ENCODE measurements at regions of chr15 and their contacts with region 1.

Region 1: GRCh38 chr15:78392430-78392829 is 45.6 kb upstream of the IREB2 start:
- DNase-seq: no peak
- H3K4me3 ChIP-seq: no peak overlapping the region
- H3K4me3 Mint-ChIP-seq: no peak overlapping the region
- H3K27ac ChIP-seq: no peak overlapping the region
- H3K27ac Mint-ChIP-seq: no peak overlapping the region
- H3K4me1 ChIP-seq: no peaks in the 10 kb centered on the region
- H3K4me1 Mint-ChIP-seq: no peaks in the 10 kb centered on the region
- H3K27me3 ChIP-seq: no peaks in the 10 kb centered on the region
- H3K27me3 Mint-ChIP-seq: peaks cover 7 to 11% of the 10 kb centered on the region in 2 donors

Region 2: GRCh38 chr15:78225783-78226541 is 166.5 kb before region 1 on chr15:
- CTCF ChIA-PET with region 1: no interaction called
- POLR2A ChIA-PET with region 1: interaction called, 15 read pairs
- DNase-seq: no peak
- H3K4me3 ChIP-seq: no peak overlapping the region
- H3K4me3 Mint-ChIP-seq: peak overlapping the region in 4 of 7 donors; percentile 21 to 52 (median 36)
- H3K27ac ChIP-seq: no peak overlapping the region
- H3K27ac Mint-ChIP-seq: peak overlapping the region in 4 of 8 donors; percentile 38 to 68 (median 50)
- H3K4me1 ChIP-seq: peaks cover 9% of the 10 kb centered on the region
- H3K4me1 Mint-ChIP-seq: peaks cover 14 to 27% (median 23%) of the 10 kb centered on the region in 3 donors
- H3K27me3 ChIP-seq: no peaks in the 10 kb centered on the region
- H3K27me3 Mint-ChIP-seq: no peaks in the 10 kb centered on the region

Region 3: DNA sequence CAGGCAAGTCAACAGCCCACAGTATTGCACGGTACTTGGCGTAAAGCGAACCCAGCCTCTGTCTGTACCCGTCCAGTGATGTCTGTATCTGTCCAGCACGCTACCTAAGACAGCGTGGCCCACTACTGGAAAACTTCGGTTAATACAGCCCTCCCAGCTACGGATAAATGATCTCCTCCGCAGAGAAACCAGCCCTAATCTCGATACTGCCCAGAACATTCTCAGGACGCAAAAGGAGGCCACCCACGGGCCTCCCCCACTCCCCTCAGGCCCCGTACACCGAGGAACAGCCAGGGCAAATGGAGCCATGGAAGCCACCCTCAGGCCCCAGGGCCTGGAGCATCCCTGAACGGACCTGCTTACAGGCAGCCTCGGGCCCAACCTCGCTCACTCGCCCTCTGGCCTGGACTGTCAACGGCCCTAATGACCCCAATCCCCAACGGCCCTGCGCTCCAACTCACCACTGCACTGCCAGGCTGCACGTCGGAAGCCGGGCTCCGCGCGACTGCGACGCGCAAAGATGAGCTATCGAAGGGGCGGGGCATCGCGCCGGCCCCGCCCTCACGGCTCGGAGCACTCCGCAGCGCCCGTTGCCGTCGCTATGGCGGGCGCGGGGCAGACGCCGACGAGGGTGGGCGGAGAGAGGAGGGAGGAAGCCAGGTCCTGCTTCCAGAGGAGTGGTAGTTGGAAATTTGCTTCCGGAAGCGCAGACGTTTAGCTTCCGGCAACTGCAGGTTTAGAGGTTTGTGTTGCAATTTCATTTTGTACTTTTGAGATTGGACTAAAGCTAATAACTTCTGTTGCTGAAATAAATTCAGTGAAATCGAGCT is 93.1 kb before region 1 on chr15 and contains the start of gene SKIC8:
- CTCF ChIA-PET with region 1: no interaction called
- POLR2A ChIA-PET with region 1: no interaction called
- DNase-seq: peak; percentile 88 to 92 (median 89)
- H3K4me3 ChIP-seq: peak within 1 kb of the TSS; percentile 86
- H3K4me3 Mint-ChIP-seq: peak within 1 kb of the TSS; percentile 95 to 99 (median 97)
- H3K27ac ChIP-seq: peak within 1 kb of the TSS; percentile 87
- H3K27ac Mint-ChIP-seq: peak within 1 kb of the TSS; percentile 89 to 98 (median 95)
- H3K4me1 ChIP-seq: peaks cover 13% of the 10 kb centered on the region
- H3K4me1 Mint-ChIP-seq: peaks cover 25 to 43% (median 31%) of the 10 kb centered on the region in 3 donors
- H3K27me3 ChIP-seq: no peaks in the 10 kb centered on the region
- H3K27me3 Mint-ChIP-seq: peaks cover 0 to 1% of the 10 kb centered on the region in 2 donors
- total RNA-seq, gene SKIC8: 60.2 to 62.9 TPM

Region 4: DNA sequence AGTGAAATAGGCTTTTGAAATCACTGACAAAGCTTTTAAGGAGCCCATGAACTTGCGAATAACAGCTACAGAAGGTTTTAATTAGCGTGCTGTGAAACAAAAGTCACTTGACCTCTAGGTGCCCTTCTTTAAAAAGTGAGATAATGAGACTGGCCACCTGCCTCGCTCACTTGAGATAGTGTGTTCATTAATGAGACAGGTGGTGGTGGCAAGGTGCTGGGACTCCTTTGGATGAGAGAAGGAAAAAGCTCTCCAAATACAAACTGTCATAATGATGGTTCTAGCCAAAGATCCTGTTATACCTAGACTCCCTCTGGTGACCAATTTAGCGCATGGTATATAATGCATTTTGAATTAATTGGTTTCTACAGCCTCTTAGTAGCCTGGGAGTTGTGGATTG is 22.9 kb after region 1 on chr15:
- CTCF ChIA-PET with region 1: no interaction called
- POLR2A ChIA-PET with region 1: no interaction called
- DNase-seq: no peak
- H3K4me3 ChIP-seq: no peak overlapping the region
- H3K4me3 Mint-ChIP-seq: no peak overlapping the region
- H3K27ac ChIP-seq: no peak overlapping the region
- H3K27ac Mint-ChIP-seq: no peak overlapping the region
- H3K4me1 ChIP-seq: no peaks in the 10 kb centered on the region
- H3K4me1 Mint-ChIP-seq: no peaks in the 10 kb centered on the region
- H3K27me3 ChIP-seq: peaks cover 3% of the 10 kb centered on the region
- H3K27me3 Mint-ChIP-seq: peaks cover 2 to 12% of the 10 kb centered on the region in 2 donors

Measured in CD8-positive, alpha-beta memory T cell (primary cell).